Activated CD4-positive, alpha-beta memory T cell treated with anti-CD3 and anti-CD28 coated beads for 36 hours (primary cell): ENCODE measurements at regions of chr21 and their contacts with region 1.

Region 1: DNA sequence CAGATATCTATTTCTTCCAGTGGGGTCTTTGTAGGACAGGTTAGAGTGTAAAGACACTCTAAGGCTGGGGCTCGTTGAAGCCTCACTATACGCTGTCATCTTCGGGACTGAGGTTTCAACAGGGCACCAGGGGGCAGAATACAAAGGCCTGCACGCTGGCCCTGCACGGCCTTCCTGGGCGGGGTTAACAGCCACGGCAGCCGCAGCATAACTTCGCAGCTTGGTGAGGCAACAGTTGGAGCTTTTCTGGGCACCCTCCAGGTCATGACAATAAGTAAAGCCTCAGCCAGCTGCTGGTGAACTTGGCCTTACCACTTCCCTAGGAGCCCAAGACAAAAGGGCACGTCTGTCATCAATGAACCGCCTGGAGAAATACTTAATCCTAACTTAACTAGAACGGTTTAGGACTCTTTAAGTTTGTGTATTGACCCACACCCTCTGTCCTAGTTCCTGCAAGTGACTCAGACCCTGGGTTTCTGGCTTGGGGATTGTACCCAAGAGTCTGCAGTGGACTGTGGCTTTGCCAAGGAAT is 2.3 kb upstream of the RUNX1 start:
- DNase-seq: peak; percentile 91
- H3K4me3 Mint-ChIP-seq: peak overlapping the region; percentile 36
- H3K27ac Mint-ChIP-seq: peak overlapping the region; percentile 99
- H3K4me1 Mint-ChIP-seq: peaks cover 53% of the 10 kb centered on the region
- H3K27me3 Mint-ChIP-seq: no peaks in the 10 kb centered on the region

Region 2: GRCh38 chr21:34745557-34746255 is 305.6 kb before region 1 on chr21:
- CTCF ChIA-PET with region 1: interaction called, 8 read pairs
- POLR2A ChIA-PET with region 1: interaction called, 3 read pairs
- intact Hi-C with region 1: loop called (anchors 10 kb)
- DNase-seq: peak; percentile 72
- H3K4me3 Mint-ChIP-seq: peak overlapping the region; percentile 43
- H3K27ac Mint-ChIP-seq: no peak overlapping the region
- H3K4me1 Mint-ChIP-seq: peaks cover 5% of the 10 kb centered on the region
- H3K27me3 Mint-ChIP-seq: peaks cover 14% of the 10 kb centered on the region

Region 3: GRCh38 chr21:34967509-34968289 is 83.7 kb before region 1 on chr21:
- CTCF ChIA-PET with region 1: interaction called, 12 read pairs
- POLR2A ChIA-PET with region 1: interaction called, 11 read pairs
- intact Hi-C with region 1: loop called (anchors 1 kb)
- DNase-seq: peak; percentile 75
- H3K4me3 Mint-ChIP-seq: peak overlapping the region; percentile 55
- H3K27ac Mint-ChIP-seq: peak overlapping the region; percentile 95
- H3K4me1 Mint-ChIP-seq: peaks cover 88% of the 10 kb centered on the region
- H3K27me3 Mint-ChIP-seq: no peaks in the 10 kb centered on the region

Region 4: GRCh38 chr21:35075546-35075945 is 24.2 kb after region 1 on chr21:
- CTCF ChIA-PET with region 1: interaction called, 8 read pairs
- POLR2A ChIA-PET with region 1: no interaction called
- intact Hi-C with region 1: loop called (anchors 2 kb)
- DNase-seq: peak; percentile 29
- H3K4me3 Mint-ChIP-seq: no peak overlapping the region
- H3K27ac Mint-ChIP-seq: no peak overlapping the region
- H3K4me1 Mint-ChIP-seq: peaks cover 12% of the 10 kb centered on the region
- H3K27me3 Mint-ChIP-seq: no peaks in the 10 kb centered on the region

Region 5: GRCh38 chr21:35150562-35151226 is 99.3 kb after region 1 on chr21:
- CTCF ChIA-PET with region 1: no interaction called
- POLR2A ChIA-PET with region 1: interaction called, 6 read pairs
- intact Hi-C with region 1: loop called (anchors 2 kb)
- DNase-seq: no peak
- H3K4me3 Mint-ChIP-seq: peak overlapping the region; percentile 6
- H3K27ac Mint-ChIP-seq: peak overlapping the region; percentile 90
- H3K4me1 Mint-ChIP-seq: peaks cover 51% of the 10 kb centered on the region
- H3K27me3 Mint-ChIP-seq: peaks cover 1% of the 10 kb centered on the region

Region 6: GRCh38 chr21:35400233-35400957 is 349.0 kb after region 1 on chr21:
- CTCF ChIA-PET with region 1: interaction called, 47 read pairs
- POLR2A ChIA-PET with region 1: no interaction called
- intact Hi-C with region 1: loop called (anchors 1 kb)
- DNase-seq: peak; percentile 37
- H3K4me3 Mint-ChIP-seq: no peak overlapping the region
- H3K27ac Mint-ChIP-seq: no peak overlapping the region
- H3K4me1 Mint-ChIP-seq: peaks cover 24% of the 10 kb centered on the region
- H3K27me3 Mint-ChIP-seq: peaks cover 3% of the 10 kb centered on the region